Activated T-helper 1 cell treated with anti-CD3 and anti-CD28 coated beads, Interleukin-12 subunit alpha, Interleukin-12 subunit beta, Interleukin-2, Interleukin-4 antibody, amounts not matched to agents 30 ng/mL and 10 ng/mL and 1 ng/mL, durations not matched to agents 14 hours and 24 hours and 36 hours (primary cell): ENCODE measurements at regions of chr10 and their contacts with region 1.

Region 1: GRCh38 chr10:24465891-24466818 is 257.2 kb downstream of the KIAA1217 start:
- DNase-seq: peak; percentile 61
- H3K4me3 Mint-ChIP-seq: peak overlapping the region; percentile 79
- H3K27ac Mint-ChIP-seq: peak overlapping the region; percentile 77
- H3K4me1 Mint-ChIP-seq: peaks cover 61% of the 10 kb centered on the region
- H3K27me3 Mint-ChIP-seq: peaks cover 6% of the 10 kb centered on the region

Region 2: GRCh38 chr10:23438550-23439441 is 1027.4 kb before region 1 on chr10 and contains the start of gene OTUD1:
- intact Hi-C with region 1: loop called (anchors 10 kb)
- DNase-seq: peak; percentile 94
- H3K4me3 Mint-ChIP-seq: peak within 1 kb of the TSS; percentile 83
- H3K27ac Mint-ChIP-seq: peak within 1 kb of the TSS; percentile 84
- H3K4me1 Mint-ChIP-seq: peaks cover 47% of the 10 kb centered on the region
- H3K27me3 Mint-ChIP-seq: peaks cover 5% of the 10 kb centered on the region
- total RNA-seq, gene OTUD1: 19.1 and 20.3 TPM in 2 replicates

Region 3: GRCh38 chr10:24383681-24384106 is 82.5 kb before region 1 on chr10:
- intact Hi-C with region 1: loop called (anchors 1 kb)
- DNase-seq: peak; percentile 60
- H3K4me3 Mint-ChIP-seq: peak overlapping the region; percentile 61
- H3K27ac Mint-ChIP-seq: peak overlapping the region; percentile 91
- H3K4me1 Mint-ChIP-seq: peaks cover 35% of the 10 kb centered on the region
- H3K27me3 Mint-ChIP-seq: peaks cover 3% of the 10 kb centered on the region

Region 4: GRCh38 chr10:24503461-24504320 is 37.5 kb after region 1 on chr10:
- intact Hi-C with region 1: loop called (anchors 1 kb)
- DNase-seq: no peak
- H3K4me3 Mint-ChIP-seq: no peak overlapping the region
- H3K27ac Mint-ChIP-seq: no peak overlapping the region
- H3K4me1 Mint-ChIP-seq: peaks cover 9% of the 10 kb centered on the region
- H3K27me3 Mint-ChIP-seq: peaks cover 2% of the 10 kb centered on the region

Region 5: GRCh38 chr10:24822590-24822989 is 356.4 kb after region 1 on chr10:
- intact Hi-C with region 1: loop called (anchors 5 kb)
- DNase-seq: no peak
- H3K4me3 Mint-ChIP-seq: no peak overlapping the region
- H3K27ac Mint-ChIP-seq: no peak overlapping the region
- H3K4me1 Mint-ChIP-seq: peaks cover 40% of the 10 kb centered on the region
- H3K27me3 Mint-ChIP-seq: peaks cover 2% of the 10 kb centered on the region

Region 6: DNA sequence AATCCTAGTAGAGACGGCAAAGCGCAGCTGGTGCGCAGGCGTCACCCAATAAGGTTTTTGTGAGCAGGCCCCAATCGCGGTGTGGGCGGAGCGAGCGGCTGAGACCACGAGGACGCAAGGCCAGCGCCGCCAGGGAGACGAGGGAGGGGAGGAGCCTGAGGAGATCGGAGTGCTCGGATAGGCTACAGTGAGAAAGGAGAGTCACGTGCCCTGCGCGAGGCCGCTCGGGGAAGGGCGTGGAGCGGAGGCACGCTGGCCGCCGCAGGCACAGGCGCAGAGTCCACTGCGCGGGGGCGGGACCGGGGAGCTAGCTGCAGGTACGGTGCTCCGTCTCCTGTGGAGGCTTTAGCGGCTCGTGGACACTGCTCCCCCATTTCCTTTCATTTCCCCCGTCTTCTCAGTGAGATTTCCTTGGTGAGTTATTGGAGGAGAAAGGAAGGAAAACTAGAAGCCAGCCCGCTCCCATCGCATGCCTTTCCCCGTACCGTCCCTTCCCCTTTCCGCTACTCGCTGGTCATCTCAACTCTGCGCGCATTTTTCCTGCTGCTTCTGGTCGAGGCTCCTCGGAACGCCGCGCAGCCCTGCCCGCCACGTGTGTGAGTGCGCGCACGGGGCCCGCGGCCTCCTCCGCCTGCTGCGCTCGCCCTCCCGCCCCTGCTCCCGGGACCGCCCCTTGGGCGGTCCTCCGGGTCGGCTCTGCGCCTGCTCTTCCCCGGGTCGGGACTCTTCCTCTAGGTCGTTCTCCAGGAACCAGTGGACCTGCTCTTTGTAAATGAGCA is 550.4 kb after region 1 on chr10 and contains the start of gene THNSL1:
- intact Hi-C with region 1: loop called (anchors 1 kb)
- DNase-seq: peak; percentile 97
- H3K4me3 Mint-ChIP-seq: peak within 1 kb of the TSS; percentile 89
- H3K27ac Mint-ChIP-seq: peak within 1 kb of the TSS; percentile 95
- H3K4me1 Mint-ChIP-seq: peaks cover 16% of the 10 kb centered on the region
- H3K27me3 Mint-ChIP-seq: peaks cover 2% of the 10 kb centered on the region
- total RNA-seq, gene THNSL1: 3.0 and 3.1 TPM in 2 replicates